Kidney (tissue), 22 donors: ENCODE measurements at regions of chr17 and their contacts with region 1.

Region 1: GRCh38 chr17:61399131-61400057 is at the start of gene TBX2:
- DNase-seq: peak; percentile 93 to 98 (median 96)
- H3K4me3 ChIP-seq: peak within 1 kb of the TSS; percentile 77 to 87 (median 86)
- H3K27ac ChIP-seq: peak within 1 kb of the TSS; percentile 88 to 95
- H3K4me1 ChIP-seq: peaks cover 0 to 24% (median 1%) of the 10 kb centered on the region in 3 donors
- H3K27me3 ChIP-seq: peaks cover 12% of the 10 kb centered on the region
- CTCF ChIP-seq: no peak
- total RNA-seq, gene TBX2: 66.4 TPM

Region 2: DNA sequence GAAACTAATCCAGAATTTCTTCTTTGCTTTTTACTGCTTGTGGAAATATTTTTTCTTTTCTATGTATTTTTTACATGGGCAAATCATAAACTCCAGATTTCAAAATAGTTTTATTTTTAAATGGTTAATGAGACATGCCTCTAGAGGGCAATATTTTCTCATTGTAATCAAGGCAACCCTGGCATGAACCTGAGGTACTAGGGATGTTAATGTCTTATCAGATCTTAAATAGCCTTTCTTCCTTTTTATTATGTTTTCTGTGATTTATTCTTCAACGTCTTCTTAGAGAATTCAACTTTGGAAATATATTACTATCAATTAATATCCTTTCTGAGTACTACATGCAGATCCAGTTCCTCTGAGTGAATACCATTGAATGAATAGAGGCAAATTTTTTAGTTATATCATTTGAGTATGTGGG is 397.1 kb before region 1 on chr17:
- intact Hi-C with region 1: loop called (anchors 5 kb)
- DNase-seq: peak in 2 of 5 donors; percentile 71 to 72
- H3K4me3 ChIP-seq: no peak overlapping the region
- H3K27ac ChIP-seq: no peak overlapping the region
- H3K4me1 ChIP-seq: peaks cover 2 to 5% (median 3%) of the 10 kb centered on the region in 3 donors
- H3K27me3 ChIP-seq: no peaks in the 10 kb centered on the region
- CTCF ChIP-seq: peak; percentile 51

Region 3: GRCh38 chr17:61294777-61295176 is 104.6 kb before region 1 on chr17:
- intact Hi-C with region 1: no loop called
- DNase-seq: peak in 2 of 5 donors; percentile 40 to 58
- H3K4me3 ChIP-seq: no peak overlapping the region
- H3K27ac ChIP-seq: no peak overlapping the region
- H3K4me1 ChIP-seq: peaks cover 3 to 7% (median 5%) of the 10 kb centered on the region in 3 donors
- H3K27me3 ChIP-seq: no peaks in the 10 kb centered on the region
- CTCF ChIP-seq: no peak

Region 4: GRCh38 chr17:61451538-61452300 is 52.3 kb after region 1 on chr17:
- intact Hi-C with region 1: no loop called
- DNase-seq: peak in 3 of 5 donors; percentile 33 to 56 (median 43)
- H3K4me3 ChIP-seq: no peak overlapping the region
- H3K27ac ChIP-seq: no peak overlapping the region
- H3K4me1 ChIP-seq: no peaks in the 10 kb centered on the region
- H3K27me3 ChIP-seq: peaks cover 39% of the 10 kb centered on the region
- CTCF ChIP-seq: no peak

Region 5: DNA sequence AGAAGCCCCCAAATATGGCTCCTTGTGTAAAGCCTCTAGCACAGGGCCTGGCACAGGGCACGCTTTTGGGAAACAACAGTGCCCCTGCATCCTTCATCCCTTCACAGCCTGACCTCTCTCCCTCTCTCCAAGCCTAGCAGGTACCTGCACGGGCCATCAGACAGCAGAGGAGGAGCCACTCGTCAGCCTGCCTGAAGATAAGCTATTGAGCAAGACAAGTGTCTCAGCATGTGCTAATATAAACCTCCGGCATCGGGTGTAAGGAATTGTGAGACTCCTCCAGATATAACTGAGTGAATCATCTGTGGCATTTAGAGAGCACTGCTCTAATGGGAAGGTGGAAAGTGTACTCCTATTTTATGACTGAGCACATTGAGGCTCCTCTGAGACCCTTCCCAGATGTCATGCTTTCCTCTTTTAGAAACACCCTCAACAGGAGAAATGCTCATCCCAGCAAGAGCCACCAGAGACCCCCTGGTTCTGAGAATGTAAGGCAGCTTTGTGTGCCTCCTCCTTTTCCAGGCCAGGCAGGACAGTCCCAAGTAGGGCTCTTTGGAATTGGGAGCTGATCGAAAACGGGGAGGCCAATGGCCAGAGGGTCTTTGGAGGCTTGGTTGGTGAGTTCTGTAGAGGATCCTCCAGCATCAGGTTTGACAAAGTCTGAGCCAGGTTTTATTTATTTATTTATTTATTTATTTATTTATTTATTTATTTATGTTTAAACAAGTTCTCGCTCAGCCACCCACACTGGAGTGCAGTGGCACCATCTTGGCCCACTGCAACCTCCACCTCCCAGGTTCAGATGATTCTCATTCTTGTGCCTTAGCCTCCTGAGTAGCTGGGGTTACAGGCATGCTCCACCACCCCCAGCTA is 91.4 kb after region 1 on chr17:
- intact Hi-C with region 1: no loop called
- DNase-seq: no peak
- H3K4me3 ChIP-seq: no peak overlapping the region
- H3K27ac ChIP-seq: no peak overlapping the region
- H3K4me1 ChIP-seq: no peaks in the 10 kb centered on the region
- H3K27me3 ChIP-seq: no peaks in the 10 kb centered on the region
- CTCF ChIP-seq: no peak

Region 6: GRCh38 chr17:61543786-61544415 is 144.5 kb after region 1 on chr17:
- intact Hi-C with region 1: no loop called
- DNase-seq: no peak
- H3K4me3 ChIP-seq: no peak overlapping the region
- H3K27ac ChIP-seq: no peak overlapping the region
- H3K4me1 ChIP-seq: no peaks in the 10 kb centered on the region
- H3K27me3 ChIP-seq: no peaks in the 10 kb centered on the region
- CTCF ChIP-seq: no peak